Activated CD4-positive, alpha-beta T cell treated with anti-CD3 and anti-CD28 coated beads, Interleukin-2, amount 10 ng/mL, durations not matched to agents 24 days and 14 days (primary cell): ENCODE measurements at regions of chr1 and their contacts with region 1.

Region 1: GRCh38 chr1:67685067-67685557 is at the start of gene GADD45A:
- DNase-seq: peak; percentile 99
- H3K4me3 Mint-ChIP-seq: peak within 1 kb of the TSS; percentile 91
- H3K27ac Mint-ChIP-seq: peak within 1 kb of the TSS; percentile 96
- H3K4me1 Mint-ChIP-seq: peaks cover 35% of the 10 kb centered on the region
- H3K27me3 Mint-ChIP-seq: no peaks in the 10 kb centered on the region
- total RNA-seq, gene GADD45A: 33.4 and 36.7 TPM in 2 replicates

Region 2: GRCh38 chr1:65812065-65812464 is 1873.0 kb before region 1 on chr1:
- intact Hi-C with region 1: loop called (anchors 2 kb)
- DNase-seq: peak; percentile 91
- H3K4me3 Mint-ChIP-seq: peak overlapping the region; percentile 4
- H3K27ac Mint-ChIP-seq: peak overlapping the region; percentile 76
- H3K4me1 Mint-ChIP-seq: peaks cover 21% of the 10 kb centered on the region
- H3K27me3 Mint-ChIP-seq: peaks cover 15% of the 10 kb centered on the region

Region 3: DNA sequence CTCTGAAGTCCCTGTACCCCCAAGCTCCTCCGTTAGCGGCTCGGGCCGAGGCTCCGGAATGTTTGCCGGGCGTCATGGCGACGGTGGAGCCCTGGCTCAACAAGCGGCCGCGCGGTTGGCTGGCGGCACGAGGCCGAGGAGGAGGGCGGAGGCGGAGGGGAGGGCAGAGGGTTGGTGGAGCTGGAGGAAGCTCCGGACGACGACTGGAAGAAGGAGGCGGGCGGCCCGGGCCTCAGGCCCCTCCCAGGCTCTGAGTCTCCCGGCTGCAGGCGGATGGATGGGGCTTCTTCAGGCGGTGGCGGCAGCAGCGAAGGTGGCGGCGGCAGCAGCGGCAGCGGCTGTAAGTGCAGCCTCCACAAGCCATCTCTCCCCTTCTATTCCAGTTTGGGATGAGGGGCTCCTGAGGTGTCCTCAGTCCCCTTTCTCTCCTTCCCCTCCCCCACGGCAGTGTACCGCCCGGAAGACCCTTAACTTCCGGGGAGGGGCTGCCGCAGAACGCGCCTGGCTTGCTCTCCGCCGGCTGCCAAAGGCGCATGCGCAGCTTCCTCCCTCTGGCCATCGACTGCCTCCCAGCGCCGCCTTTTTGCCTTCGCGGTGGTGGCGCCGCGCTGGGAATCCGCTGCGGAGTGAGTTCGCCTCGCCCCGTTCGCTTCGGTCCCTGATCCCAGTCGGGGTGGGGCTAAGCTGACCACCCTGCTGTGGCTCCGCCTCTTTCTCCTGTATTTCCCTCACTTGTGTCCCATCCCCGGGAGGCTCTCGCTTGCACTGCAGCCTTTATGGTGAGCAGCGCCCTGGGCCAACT is 760.2 kb before region 1 on chr1 and contains the starts of genes DNAI4 and MIER1:
- intact Hi-C with region 1: loop called (anchors 2 kb)
- DNase-seq: peak; percentile 99
- H3K4me3 Mint-ChIP-seq: peak within 1 kb of the TSS; percentile 99
- H3K27ac Mint-ChIP-seq: peak within 1 kb of the TSS; percentile 97
- H3K4me1 Mint-ChIP-seq: peaks cover 41% of the 10 kb centered on the region
- H3K27me3 Mint-ChIP-seq: no peaks in the 10 kb centered on the region
- total RNA-seq, gene DNAI4: 0.26 and 2.7 TPM in 2 replicates
- total RNA-seq, gene MIER1: 51.8 and 54.9 TPM in 2 replicates

Region 4: GRCh38 chr1:67214420-67215174 is 470.5 kb before region 1 on chr1:
- intact Hi-C with region 1: loop called (anchors 5 kb)
- DNase-seq: peak; percentile 88
- H3K4me3 Mint-ChIP-seq: no peak overlapping the region
- H3K27ac Mint-ChIP-seq: peak overlapping the region; percentile 62
- H3K4me1 Mint-ChIP-seq: peaks cover 41% of the 10 kb centered on the region
- H3K27me3 Mint-ChIP-seq: no peaks in the 10 kb centered on the region

Region 5: GRCh38 chr1:67332653-67333529 is 352.2 kb before region 1 on chr1:
- intact Hi-C with region 1: loop called (anchors 2 kb)
- DNase-seq: peak; percentile 86
- H3K4me3 Mint-ChIP-seq: peak overlapping the region; percentile 74
- H3K27ac Mint-ChIP-seq: peak overlapping the region; percentile 85
- H3K4me1 Mint-ChIP-seq: peaks cover 73% of the 10 kb centered on the region
- H3K27me3 Mint-ChIP-seq: no peaks in the 10 kb centered on the region

Region 6: GRCh38 chr1:67700692-67701410 is 15.7 kb after region 1 on chr1:
- intact Hi-C with region 1: loop called (anchors 1 kb)
- DNase-seq: no peak
- H3K4me3 Mint-ChIP-seq: no peak overlapping the region
- H3K27ac Mint-ChIP-seq: peak overlapping the region; percentile 66
- H3K4me1 Mint-ChIP-seq: peaks cover 16% of the 10 kb centered on the region
- H3K27me3 Mint-ChIP-seq: peaks cover 3% of the 10 kb centered on the region

Region 7: GRCh38 chr1:67748630-67749029 is 63.5 kb after region 1 on chr1:
- intact Hi-C with region 1: loop called (anchors 1 kb)
- DNase-seq: no peak
- H3K4me3 Mint-ChIP-seq: peak overlapping the region; percentile 21
- H3K27ac Mint-ChIP-seq: no peak overlapping the region
- H3K4me1 Mint-ChIP-seq: peaks cover 23% of the 10 kb centered on the region
- H3K27me3 Mint-ChIP-seq: peaks cover 18% of the 10 kb centered on the region

Region 8: GRCh38 chr1:67785847-67786753 is 101.0 kb after region 1 on chr1:
- intact Hi-C with region 1: no loop called
- DNase-seq: no peak
- H3K4me3 Mint-ChIP-seq: no peak overlapping the region
- H3K27ac Mint-ChIP-seq: no peak overlapping the region
- H3K4me1 Mint-ChIP-seq: no peaks in the 10 kb centered on the region
- H3K27me3 Mint-ChIP-seq: peaks cover 8% of the 10 kb centered on the region